ENCODE measurements at regions of chr17 and their contacts with region 1.

Region 1: DNA sequence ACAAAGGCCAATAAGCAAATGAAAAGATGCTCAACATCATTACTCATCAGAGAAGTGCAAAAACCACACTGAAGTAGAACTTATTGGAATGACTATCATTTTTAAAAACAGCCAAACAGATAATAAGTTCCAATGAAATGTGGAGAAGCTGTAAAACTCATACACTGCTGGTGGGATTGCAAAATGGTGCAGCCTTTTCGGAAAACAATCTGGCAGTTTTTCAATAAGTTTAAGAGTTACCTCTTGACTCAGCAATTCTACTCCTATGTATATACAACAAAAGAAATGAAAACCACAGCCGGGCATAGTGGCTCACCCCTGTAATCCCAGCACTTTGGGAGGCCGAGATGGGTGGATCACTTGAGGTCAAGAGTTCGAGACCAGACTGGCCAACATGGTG is 49.3 kb downstream of the AKAP10 start:
- DNase-seq: no peak
- ATAC-seq: no peak
- H3K4me3 ChIP-seq: no peak overlapping the region
- H3K4me3 Mint-ChIP-seq: no peak overlapping the region
- H3K27ac ChIP-seq: no peak overlapping the region
- H3K27ac Mint-ChIP-seq: no peak overlapping the region
- H3K4me1 ChIP-seq: no peaks in the 10 kb centered on the region
- H3K4me1 Mint-ChIP-seq: peaks cover 5% of the 10 kb centered on the region
- H3K27me3 ChIP-seq: no peaks in the 10 kb centered on the region
- H3K27me3 Mint-ChIP-seq: no peaks in the 10 kb centered on the region
- CTCF ChIP-seq: no peak

Region 2: GRCh38 chr17:19955099-19955498 is 26.8 kb after region 1 on chr17:
- CTCF ChIA-PET with region 1: no interaction called
- POLR2A ChIA-PET with region 1: no interaction called
- intact Hi-C with region 1: loop called in 1 of 2 experiments (anchors 2 kb)
- DNase-seq: no peak
- ATAC-seq: peak; percentile 37
- H3K4me3 ChIP-seq: no peak overlapping the region
- H3K4me3 Mint-ChIP-seq: no peak overlapping the region
- H3K27ac ChIP-seq: no peak overlapping the region
- H3K27ac Mint-ChIP-seq: peak overlapping the region; percentile 66
- H3K4me1 ChIP-seq: peaks cover 4% of the 10 kb centered on the region
- H3K4me1 Mint-ChIP-seq: peaks cover 55% of the 10 kb centered on the region
- H3K27me3 ChIP-seq: no peaks in the 10 kb centered on the region
- H3K27me3 Mint-ChIP-seq: no peaks in the 10 kb centered on the region
- CTCF ChIP-seq: no peak

Measured in CD4-positive, alpha-beta T cell (primary cell).